Activated naive CD4-positive, alpha-beta T cell treated with anti-CD3 and anti-CD28 coated beads for 36 hours (primary cell): ENCODE measurements at regions of chr2 and their contacts with region 1.

Region 1: GRCh38 chr2:34096562-34097171 is 497.6 kb upstream of the FAM98A start:
- DNase-seq: peak; percentile 59
- H3K4me3 Mint-ChIP-seq: no peak overlapping the region
- H3K27ac Mint-ChIP-seq: no peak overlapping the region
- H3K4me1 Mint-ChIP-seq: no peaks in the 10 kb centered on the region
- H3K27me3 Mint-ChIP-seq: peaks cover 3% of the 10 kb centered on the region

Region 2: DNA sequence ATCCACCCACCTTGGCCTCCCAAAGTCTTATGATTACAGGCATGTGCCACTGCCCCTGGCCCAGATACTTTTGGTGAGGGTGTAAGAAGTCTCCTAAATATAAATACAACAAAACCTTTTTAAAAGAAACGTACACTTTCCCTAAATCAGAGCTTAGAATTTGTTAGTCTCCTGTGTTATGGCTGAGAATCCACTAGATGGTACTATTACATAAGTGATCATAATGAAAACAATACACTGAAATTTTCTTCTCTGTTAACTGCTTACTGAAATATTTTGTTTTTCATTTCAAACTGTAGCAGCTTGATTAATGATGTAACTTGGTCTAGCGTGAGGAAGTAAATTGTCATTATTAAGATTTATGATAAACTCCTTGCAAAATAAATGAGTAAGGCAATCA is 422.7 kb before region 1 on chr2:
- CTCF ChIA-PET with region 1: no interaction called
- intact Hi-C with region 1: loop called (anchors 10 kb)
- DNase-seq: no peak
- H3K4me3 Mint-ChIP-seq: no peak overlapping the region
- H3K27ac Mint-ChIP-seq: no peak overlapping the region
- H3K4me1 Mint-ChIP-seq: no peaks in the 10 kb centered on the region
- H3K27me3 Mint-ChIP-seq: peaks cover 9% of the 10 kb centered on the region

Region 3: DNA sequence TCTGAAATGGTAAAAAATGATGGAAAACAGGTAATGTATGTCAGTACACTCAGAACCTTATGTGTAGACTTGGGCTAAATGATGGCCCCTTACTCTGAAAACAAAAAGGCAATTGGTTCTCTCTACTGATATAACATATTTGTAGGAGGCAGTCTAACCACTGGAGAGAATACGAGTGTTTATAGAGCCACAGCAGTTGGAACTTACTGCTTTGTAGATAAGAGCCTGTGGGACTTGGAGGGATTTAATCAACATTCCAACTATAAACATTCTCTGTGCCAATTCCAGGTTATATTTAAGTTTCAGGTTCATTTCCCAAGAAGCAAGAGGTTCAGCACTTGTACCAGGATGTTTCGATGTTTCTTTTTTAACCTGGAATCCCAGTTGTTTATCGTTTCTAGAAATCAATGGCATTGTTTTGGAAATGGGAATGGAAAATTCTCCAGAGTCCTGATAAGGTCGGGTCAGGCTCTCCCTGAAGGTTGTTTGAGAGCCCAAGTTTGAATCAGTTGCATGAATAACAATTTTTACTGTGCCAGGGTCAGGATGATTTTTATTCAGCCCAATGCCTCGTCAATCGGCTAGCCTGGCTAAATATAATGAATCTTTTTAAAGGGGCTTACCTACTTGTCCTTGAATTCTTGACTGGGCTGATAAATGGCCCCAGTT is 219.2 kb before region 1 on chr2:
- CTCF ChIA-PET with region 1: no interaction called
- intact Hi-C with region 1: no loop called
- DNase-seq: no peak
- H3K4me3 Mint-ChIP-seq: no peak overlapping the region
- H3K27ac Mint-ChIP-seq: no peak overlapping the region
- H3K4me1 Mint-ChIP-seq: no peaks in the 10 kb centered on the region
- H3K27me3 Mint-ChIP-seq: no peaks in the 10 kb centered on the region

Region 4: GRCh38 chr2:34121076-34121475 is 24.4 kb after region 1 on chr2:
- CTCF ChIA-PET with region 1: no interaction called
- intact Hi-C with region 1: no loop called
- DNase-seq: no peak
- H3K4me3 Mint-ChIP-seq: no peak overlapping the region
- H3K27ac Mint-ChIP-seq: no peak overlapping the region
- H3K4me1 Mint-ChIP-seq: no peaks in the 10 kb centered on the region
- H3K27me3 Mint-ChIP-seq: peaks cover 11% of the 10 kb centered on the region

Region 5: DNA sequence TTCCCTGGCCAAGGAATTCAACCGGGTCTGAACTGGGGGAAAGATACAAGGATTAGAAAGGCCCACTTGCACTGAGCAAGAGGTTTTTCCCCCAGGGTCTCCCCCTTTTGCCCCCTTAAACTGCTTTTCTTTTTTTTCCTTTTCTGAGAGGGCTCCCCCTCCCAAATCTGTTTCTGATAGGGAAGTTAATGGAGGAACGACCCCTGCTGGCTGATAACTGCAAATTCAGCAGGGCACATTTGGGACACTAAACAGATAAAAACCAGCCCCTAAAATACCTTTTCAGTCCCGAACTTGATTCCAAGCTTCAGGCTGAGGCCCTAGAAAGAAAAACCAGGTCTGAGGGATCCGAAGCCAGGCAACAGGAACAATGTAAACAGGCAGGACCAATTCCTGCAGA is 1246.5 kb after region 1 on chr2:
- CTCF ChIA-PET with region 1: no interaction called
- intact Hi-C with region 1: loop called (anchors 2 kb)
- DNase-seq: no peak
- H3K4me3 Mint-ChIP-seq: no peak overlapping the region
- H3K27ac Mint-ChIP-seq: no peak overlapping the region
- H3K4me1 Mint-ChIP-seq: no peaks in the 10 kb centered on the region
- H3K27me3 Mint-ChIP-seq: no peaks in the 10 kb centered on the region

Region 6: DNA sequence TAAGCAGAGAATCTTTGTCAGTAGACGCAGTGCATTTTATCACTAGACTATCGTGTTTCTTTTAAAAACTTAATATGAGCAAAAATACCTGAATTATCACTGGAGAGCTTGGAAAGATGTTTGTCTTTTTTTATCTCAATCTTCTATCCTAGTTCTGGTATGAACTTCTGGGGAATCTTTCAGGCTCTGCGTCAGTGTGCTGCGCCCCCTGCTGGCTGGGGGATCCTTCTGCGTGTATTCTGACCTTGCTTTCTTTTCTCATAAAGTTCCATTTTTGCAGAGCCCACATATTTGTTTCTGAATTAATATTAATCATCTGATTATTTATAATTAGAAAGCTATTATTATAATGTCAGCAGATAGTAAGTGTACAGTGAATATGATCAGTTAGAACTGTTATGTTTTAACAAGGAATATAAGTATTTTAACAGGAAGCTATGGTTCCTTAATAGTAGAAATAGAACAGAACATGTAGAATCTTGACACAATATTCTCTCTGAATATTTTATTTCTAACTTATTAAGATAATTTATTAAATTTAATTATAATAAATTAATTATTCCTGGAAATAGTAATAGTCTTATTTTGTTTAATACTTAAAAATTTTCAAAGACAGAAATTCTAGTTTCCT is 1313.9 kb after region 1 on chr2:
- CTCF ChIA-PET with region 1: no interaction called
- intact Hi-C with region 1: loop called (anchors 1 kb)
- DNase-seq: peak; percentile 53
- H3K4me3 Mint-ChIP-seq: no peak overlapping the region
- H3K27ac Mint-ChIP-seq: no peak overlapping the region
- H3K4me1 Mint-ChIP-seq: no peaks in the 10 kb centered on the region
- H3K27me3 Mint-ChIP-seq: peaks cover 2% of the 10 kb centered on the region

Region 7: DNA sequence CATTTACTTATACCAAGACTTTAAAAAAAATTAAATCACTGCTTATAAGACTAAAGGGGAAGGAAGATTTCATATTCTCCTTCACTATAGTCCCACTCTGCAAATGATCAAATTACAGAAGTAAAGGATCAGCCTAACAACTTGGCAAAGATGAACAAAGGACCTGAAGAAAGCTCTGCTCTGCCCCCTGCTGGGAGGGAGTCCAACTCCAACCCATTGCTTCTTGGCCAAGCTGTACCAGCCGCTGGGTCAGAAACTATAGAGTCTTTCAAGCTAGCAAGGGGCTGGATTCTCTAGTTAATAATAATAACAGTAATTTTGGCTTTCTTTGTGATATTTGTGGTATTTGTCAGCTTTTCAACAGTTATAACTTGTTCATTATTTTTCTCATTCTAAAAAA is 1331.9 kb after region 1 on chr2:
- CTCF ChIA-PET with region 1: no interaction called
- intact Hi-C with region 1: loop called (anchors 1 kb)
- DNase-seq: peak; percentile 35
- H3K4me3 Mint-ChIP-seq: no peak overlapping the region
- H3K27ac Mint-ChIP-seq: no peak overlapping the region
- H3K4me1 Mint-ChIP-seq: no peaks in the 10 kb centered on the region
- H3K27me3 Mint-ChIP-seq: no peaks in the 10 kb centered on the region